HEK293 (cell line): ENCODE measurements at regions of chr10 and their contacts with region 1.

Region 1: DNA sequence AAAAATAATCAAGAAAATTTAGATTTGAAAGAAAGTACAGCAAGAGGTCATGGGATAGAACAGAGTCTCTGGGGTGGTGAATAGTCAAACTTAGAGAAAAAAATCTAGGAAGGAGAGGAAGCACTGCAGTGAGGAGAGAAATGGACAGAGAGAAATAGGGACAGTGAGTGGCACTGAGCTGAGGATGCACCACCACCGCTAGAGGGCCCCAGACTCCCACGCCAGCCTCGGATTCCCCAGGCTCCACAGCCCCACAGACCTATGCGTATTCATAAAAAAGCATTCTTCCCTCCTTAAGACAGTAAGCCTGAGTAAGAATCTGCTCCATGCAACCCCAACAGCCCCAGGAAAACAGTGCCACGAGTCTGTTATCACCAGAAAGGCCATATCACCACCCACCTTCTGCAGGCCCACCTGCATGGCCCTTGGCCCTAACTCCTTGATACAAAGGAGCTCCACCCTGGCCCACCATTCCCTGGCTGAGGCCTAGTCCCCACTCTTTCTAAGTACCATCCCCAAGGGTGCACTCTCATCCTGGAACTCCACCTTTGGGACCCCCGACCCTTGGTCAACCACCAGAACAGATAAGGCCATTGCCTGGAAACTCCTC is 91.0 kb downstream of the ALOX5 start:
- H3K4me3 ChIP-seq: no peak overlapping the region
- H3K27ac ChIP-seq: no peak overlapping the region
- H3K4me1 ChIP-seq: no peaks in the 10 kb centered on the region
- CTCF ChIP-seq: peak; percentile 87

Region 2: GRCh38 chr10:45249978-45250693 is 214.9 kb before region 1 on chr10:
- CTCF ChIA-PET with region 1: interaction called, 17 read pairs
- POLR2A ChIA-PET with region 1: no interaction called
- H3K4me3 ChIP-seq: peak overlapping the region; percentile 31
- H3K27ac ChIP-seq: no peak overlapping the region
- H3K4me1 ChIP-seq: no peaks in the 10 kb centered on the region
- CTCF ChIP-seq: 0 out of 2 replicates have a peak, but pooled peaks have one; percentile 7

Region 3: DNA sequence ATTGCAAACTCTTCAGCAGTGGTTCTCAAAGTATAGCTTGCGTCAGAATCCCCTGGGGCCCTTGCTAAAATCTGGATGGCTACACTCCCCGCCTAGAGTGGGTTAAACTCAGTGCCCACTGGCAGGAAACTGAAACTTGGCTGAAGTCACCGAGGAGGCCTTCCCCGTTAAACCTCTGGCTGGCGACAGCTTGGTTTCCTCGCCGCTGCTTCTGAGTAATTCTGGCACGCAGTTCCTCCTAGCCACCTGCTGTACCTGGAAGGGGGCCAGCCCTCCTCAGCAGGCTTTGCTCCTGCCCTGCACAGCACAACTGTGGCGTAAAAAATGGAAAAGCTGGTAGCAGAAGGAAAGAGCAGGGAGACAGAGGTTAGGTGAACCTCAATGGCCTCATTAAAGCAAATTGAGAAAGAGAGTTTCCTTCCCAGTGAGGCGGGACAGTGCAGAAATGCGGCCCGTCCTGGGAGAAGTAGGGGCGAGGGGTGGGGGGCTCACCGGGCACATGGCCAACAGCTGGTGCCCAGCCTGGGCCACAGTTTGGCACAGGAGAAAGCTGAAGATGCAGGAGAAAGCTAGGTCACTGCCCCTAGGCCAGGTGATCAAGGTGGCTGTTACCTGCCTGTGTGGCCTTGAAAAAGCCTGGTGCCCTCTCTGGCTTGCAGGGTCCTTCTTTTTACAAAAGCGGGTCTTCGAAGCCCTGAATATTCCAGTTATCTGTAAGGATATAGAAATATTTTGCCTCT is 44.4 kb before region 1 on chr10:
- CTCF ChIA-PET with region 1: no interaction called
- POLR2A ChIA-PET with region 1: no interaction called
- H3K4me3 ChIP-seq: no peak overlapping the region
- H3K27ac ChIP-seq: 0 out of 2 replicates have a peak overlapping the region, but pooled peaks have one; percentile 24
- H3K4me1 ChIP-seq: peaks cover 6% of the 10 kb centered on the region; the same call in 1 of the 2 replicates
- CTCF ChIP-seq: no peak

Region 4: GRCh38 chr10:45672181-45673073 is 207.4 kb after region 1 on chr10 and contains the start of gene ZFAND4:
- CTCF ChIA-PET with region 1: interaction called, 23 read pairs
- POLR2A ChIA-PET with region 1: interaction called, 3 read pairs
- H3K4me3 ChIP-seq: peak within 1 kb of the TSS; percentile 74
- H3K27ac ChIP-seq: peak within 1 kb of the TSS; percentile 96
- H3K4me1 ChIP-seq: no peaks in the 10 kb centered on the region
- CTCF ChIP-seq: peak; percentile 81

Region 5: GRCh38 chr10:46062723-46063428 is 597.8 kb after region 1 on chr10:
- CTCF ChIA-PET with region 1: no interaction called
- POLR2A ChIA-PET with region 1: no interaction called
- H3K4me3 ChIP-seq: no peak overlapping the region
- H3K27ac ChIP-seq: no peak overlapping the region
- H3K4me1 ChIP-seq: no peaks in the 10 kb centered on the region
- CTCF ChIP-seq: no peak